ENCODE measurements at regions of chr20 and their contacts with region 1.

Region 1: GRCh38 chr20:32779500-32780211 is 17.5 kb downstream of the DNMT3B start:
- DNase-seq: no peak
- H3K4me3 ChIP-seq: no peak overlapping the region
- H3K27ac ChIP-seq: no peak overlapping the region
- H3K4me1 ChIP-seq: peaks cover 24% of the 10 kb centered on the region
- H3K27me3 ChIP-seq: no peaks in the 10 kb centered on the region
- CTCF ChIP-seq: no peak

Region 2: GRCh38 chr20:32674362-32674789 is 105.3 kb before region 1 on chr20:
- CTCF ChIA-PET with region 1: interaction called, 24 read pairs
- dilution Hi-C with region 1: loop called (anchors 5 kb)
- in situ Hi-C with region 1: loop called in 1 of 2 experiments (anchors 5 kb)
- intact Hi-C with region 1: loop called (anchors 1 kb)
- DNase-seq: peak; percentile 44
- H3K4me3 ChIP-seq: no peak overlapping the region
- H3K27ac ChIP-seq: no peak overlapping the region
- H3K4me1 ChIP-seq: peaks cover 5% of the 10 kb centered on the region
- H3K27me3 ChIP-seq: no peaks in the 10 kb centered on the region
- CTCF ChIP-seq: peak; percentile 88 to 93

Region 3: DNA sequence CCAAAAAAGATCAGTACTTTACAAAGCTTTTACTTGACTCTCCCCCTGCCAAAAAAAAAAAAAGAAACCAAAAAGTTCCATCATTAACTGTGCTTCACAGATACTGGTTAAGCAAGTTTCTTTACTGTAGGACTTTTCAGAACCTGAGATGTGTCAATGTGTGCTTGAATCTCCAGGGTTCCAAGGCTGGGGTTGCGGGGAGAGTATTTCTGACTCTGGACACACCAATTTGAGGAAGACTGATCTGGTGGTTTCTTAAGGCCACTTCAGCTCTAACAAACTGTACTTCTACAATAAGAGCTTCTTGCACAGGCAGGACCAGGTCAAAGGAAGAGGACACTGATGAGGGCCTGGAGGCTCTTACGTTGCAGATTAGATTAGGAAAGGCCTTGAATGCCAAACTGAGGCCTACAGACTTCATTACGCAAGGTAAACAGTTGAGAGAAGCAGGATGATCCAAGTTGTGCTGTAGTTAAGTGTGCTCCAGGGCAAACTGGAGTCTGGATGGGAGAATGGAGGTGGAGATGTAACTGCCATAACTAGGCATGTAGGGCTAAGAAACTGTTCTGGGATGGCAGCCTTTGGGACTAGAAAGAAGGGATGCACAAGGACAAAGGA is 60.8 kb before region 1 on chr20:
- CTCF ChIA-PET with region 1: no interaction called
- dilution Hi-C with region 1: loop called (anchors 5 kb)
- in situ Hi-C with region 1: no loop called
- intact Hi-C with region 1: no loop called
- DNase-seq: no peak
- H3K4me3 ChIP-seq: no peak overlapping the region
- H3K27ac ChIP-seq: no peak overlapping the region
- H3K4me1 ChIP-seq: no peaks in the 10 kb centered on the region
- H3K27me3 ChIP-seq: no peaks in the 10 kb centered on the region
- CTCF ChIP-seq: no peak

Region 4: DNA sequence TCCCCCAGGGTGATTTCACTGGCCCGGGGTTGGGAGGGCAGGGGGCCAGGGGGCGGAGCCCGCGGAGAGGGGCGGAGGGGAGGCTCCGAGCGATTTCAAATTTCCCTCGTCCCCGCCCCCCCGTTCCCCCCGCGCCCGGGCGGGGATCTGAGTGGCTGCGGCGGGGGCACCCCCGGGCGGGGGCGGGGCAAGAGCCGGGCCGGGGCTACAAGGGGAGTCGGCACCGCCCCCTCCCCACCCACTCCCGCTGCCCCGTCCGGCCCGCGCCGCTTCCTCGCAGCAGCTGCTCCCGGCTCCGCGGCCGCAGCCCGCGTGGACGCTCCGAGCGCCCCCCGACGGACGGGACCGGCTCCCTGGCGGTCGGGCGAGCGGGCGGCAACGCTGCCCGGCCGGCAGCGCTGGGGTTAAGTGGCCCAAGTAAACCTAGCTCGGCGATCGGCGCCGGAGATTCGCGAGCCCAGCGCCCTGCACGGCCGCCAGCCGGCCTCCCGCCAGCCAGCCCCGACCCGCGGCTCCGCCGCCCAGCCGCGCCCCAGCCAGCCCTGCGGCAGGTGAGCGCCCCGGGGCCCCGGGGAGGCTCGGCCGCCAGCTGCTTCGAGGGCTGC is 17.4 kb before region 1 on chr20 and contains the start of gene DNMT3B:
- CTCF ChIA-PET with region 1: interaction called, 6 read pairs
- dilution Hi-C with region 1: no loop called
- in situ Hi-C with region 1: no loop called
- intact Hi-C with region 1: loop called (anchors 2 kb)
- DNase-seq: peak; percentile 49
- H3K4me3 ChIP-seq: peak within 1 kb of the TSS; percentile 50 to 64 (median 61)
- H3K27ac ChIP-seq: no peak within 1 kb of the TSS
- H3K4me1 ChIP-seq: peaks cover 10% of the 10 kb centered on the region
- H3K27me3 ChIP-seq: peaks cover 3% of the 10 kb centered on the region
- CTCF ChIP-seq: peak in 1 of 2 donors; percentile 9
- total RNA-seq, gene DNMT3B: 1.2 to 2.0 TPM